WTC11 (cell line): ENCODE measurements at regions of chr14 and their contacts with region 1.

Region 1: DNA sequence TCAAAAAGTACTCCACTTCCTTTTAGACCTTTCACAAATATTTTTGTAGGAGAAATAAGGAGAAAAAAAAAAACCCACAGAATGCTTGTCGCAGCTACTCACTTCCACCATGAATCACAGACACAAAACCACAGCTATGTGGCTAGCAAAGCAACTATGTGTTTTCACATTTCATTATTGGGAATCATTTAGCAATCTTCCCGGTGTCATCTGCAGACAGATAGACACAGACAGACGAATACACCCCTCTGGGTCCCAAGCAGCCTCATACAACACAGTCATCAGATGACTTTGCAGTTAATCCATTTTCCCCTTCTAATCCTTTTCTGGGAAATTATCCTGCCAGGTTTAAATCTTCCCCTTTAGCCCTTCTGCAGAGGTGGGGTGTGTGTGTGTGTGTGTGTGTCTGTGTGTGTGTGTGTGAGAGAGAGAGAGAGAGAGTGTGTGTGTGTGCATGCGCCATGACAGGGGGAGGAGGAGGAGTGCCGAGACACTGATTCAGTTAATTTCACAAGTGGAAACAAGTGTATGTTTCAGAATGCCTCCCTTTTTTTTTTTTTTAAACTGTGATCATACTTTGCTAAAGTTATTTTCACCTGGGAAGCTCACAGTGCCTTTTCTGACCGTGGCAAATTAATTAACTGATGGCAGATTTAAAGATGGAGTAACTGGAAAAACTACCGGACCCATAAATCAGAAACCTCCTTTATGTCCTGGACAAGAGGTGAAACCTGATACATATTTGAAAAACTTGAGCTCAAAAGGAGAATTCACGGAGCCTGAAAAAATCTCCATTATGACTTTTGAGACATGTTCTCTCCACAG is 39.9 kb downstream of the LTBP2 start:
- DNase-seq: no peak
- ATAC-seq: no peak
- H3K4me3 Mint-ChIP-seq: no peak overlapping the region
- H3K27ac Mint-ChIP-seq: 0 out of 2 replicates have a peak overlapping the region, but pooled peaks have one; percentile 53
- H3K4me1 Mint-ChIP-seq: peaks cover 31% of the 10 kb centered on the region
- H3K27me3 Mint-ChIP-seq: no peaks in the 10 kb centered on the region
- CTCF ChIP-seq: no peak

Region 2: DNA sequence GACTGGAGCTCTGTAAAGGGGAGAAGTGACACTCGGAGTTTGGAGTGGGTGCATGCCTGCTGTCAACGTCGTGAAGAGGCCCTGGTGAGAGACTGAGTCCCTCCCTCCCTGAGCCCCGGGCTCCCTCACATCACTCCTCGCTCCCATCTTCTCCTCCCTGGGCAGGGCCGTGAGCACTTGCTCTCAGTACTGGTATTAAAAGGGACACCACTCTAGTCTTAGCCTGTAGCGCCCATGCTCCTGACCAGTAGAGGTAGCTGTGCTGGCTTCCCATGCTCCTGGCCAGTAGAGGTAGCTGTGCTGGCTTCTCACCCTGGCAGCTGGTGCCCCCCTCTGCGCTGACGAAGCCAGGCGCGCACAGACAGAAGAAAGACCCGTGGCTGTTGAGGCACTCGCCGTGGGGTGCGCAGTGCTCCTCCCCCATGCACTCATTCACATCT is 63.8 kb before region 1 on chr14:
- CTCF ChIA-PET with region 1: interaction called, 26 read pairs
- POLR2A ChIA-PET with region 1: no interaction called
- DNase-seq: peak; percentile 76
- ATAC-seq: peak; percentile 92
- H3K4me3 Mint-ChIP-seq: no peak overlapping the region
- H3K27ac Mint-ChIP-seq: no peak overlapping the region
- H3K4me1 Mint-ChIP-seq: peaks cover 25% of the 10 kb centered on the region
- H3K27me3 Mint-ChIP-seq: peaks cover 8% of the 10 kb centered on the region
- CTCF ChIP-seq: no peak

Region 3: GRCh38 chr14:74549588-74549987 is 22.5 kb before region 1 on chr14:
- CTCF ChIA-PET with region 1: interaction called, 36 read pairs
- POLR2A ChIA-PET with region 1: no interaction called
- DNase-seq: no peak
- ATAC-seq: peak; percentile 66
- H3K4me3 Mint-ChIP-seq: no peak overlapping the region
- H3K27ac Mint-ChIP-seq: no peak overlapping the region
- H3K4me1 Mint-ChIP-seq: peaks cover 13% of the 10 kb centered on the region
- H3K27me3 Mint-ChIP-seq: no peaks in the 10 kb centered on the region
- CTCF ChIP-seq: no peak

Region 4: GRCh38 chr14:74591899-74592298 is 19.8 kb after region 1 on chr14:
- CTCF ChIA-PET with region 1: interaction called, 50 read pairs
- POLR2A ChIA-PET with region 1: no interaction called
- DNase-seq: no peak
- ATAC-seq: no peak
- H3K4me3 Mint-ChIP-seq: no peak overlapping the region
- H3K27ac Mint-ChIP-seq: no peak overlapping the region; the same call in 1 of the 2 replicates
- H3K4me1 Mint-ChIP-seq: peaks cover 4% of the 10 kb centered on the region; the same call in 1 of the 2 replicates
- H3K27me3 Mint-ChIP-seq: no peaks in the 10 kb centered on the region
- CTCF ChIP-seq: no peak

Region 5: GRCh38 chr14:74612350-74613021 is 40.4 kb after region 1 on chr14:
- CTCF ChIA-PET with region 1: interaction called, 110 read pairs
- POLR2A ChIA-PET with region 1: interaction called, 4 read pairs
- DNase-seq: peak; percentile 88
- ATAC-seq: peak; percentile 84
- H3K4me3 Mint-ChIP-seq: peak overlapping the region; percentile 76
- H3K27ac Mint-ChIP-seq: no peak overlapping the region
- H3K4me1 Mint-ChIP-seq: peaks cover 21% of the 10 kb centered on the region
- H3K27me3 Mint-ChIP-seq: peaks cover 68% of the 10 kb centered on the region
- CTCF ChIP-seq: peak; percentile 40